ENCODE measurements at regions of chr22 and their contacts with region 1.

Region 1: GRCh38 chr22:46006379-46007002 is 29.5 kb upstream of the WNT7B start:
- H3K4me3 ChIP-seq: no peak overlapping the region
- H3K27ac ChIP-seq: peak overlapping the region; percentile 10; the same call in 1 of the 2 replicates
- H3K4me1 ChIP-seq: no peaks in the 10 kb centered on the region; the same call in 1 of the 2 replicates
- CTCF ChIP-seq: peak; percentile 96

Region 2: DNA sequence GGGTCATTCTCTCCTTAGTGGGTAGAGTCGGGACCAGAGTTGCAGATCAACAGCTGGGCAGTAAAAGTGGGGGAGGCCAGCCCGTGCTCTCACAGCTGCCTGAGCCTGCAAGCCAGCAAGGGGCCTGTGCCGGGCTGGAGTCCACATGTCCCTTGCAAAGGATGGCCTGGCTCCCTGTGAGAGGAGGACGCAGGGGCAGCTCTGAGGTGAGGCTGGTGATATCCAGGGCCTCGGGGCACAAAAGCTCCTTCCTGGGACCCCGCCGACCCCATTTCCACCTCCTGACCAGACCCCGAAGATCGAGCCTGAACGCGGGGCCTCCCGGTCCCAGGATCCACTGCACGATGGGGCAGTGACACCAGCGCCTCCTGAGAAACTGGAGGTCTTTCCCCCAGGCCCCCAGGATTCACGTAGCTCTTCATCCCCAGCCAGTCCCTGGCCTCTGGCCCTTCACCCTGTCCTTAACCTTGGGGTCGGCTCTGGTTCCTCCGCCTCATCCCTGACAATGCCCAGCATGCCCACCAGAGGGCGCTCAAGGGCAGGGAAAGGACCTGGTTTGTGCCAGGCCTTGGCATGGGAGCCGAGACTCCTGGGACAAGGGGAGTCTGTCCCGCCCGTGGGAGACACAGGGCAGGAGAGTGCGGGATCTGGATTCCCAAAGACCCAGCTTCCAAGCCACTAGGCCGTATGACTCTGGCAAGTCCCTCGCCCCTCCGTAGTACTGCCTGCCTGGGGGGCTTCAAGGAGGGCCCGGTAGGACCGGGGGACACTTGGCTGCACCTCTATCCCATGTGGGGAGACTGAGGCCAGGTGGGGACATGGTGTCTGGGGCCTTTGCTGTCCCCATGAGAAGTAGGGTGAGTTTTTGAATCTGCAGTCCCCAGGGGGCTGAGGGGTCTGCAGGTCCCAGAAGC is 11.7 kb before region 1 on chr22:
- CTCF ChIA-PET with region 1: interaction called, 99 read pairs
- POLR2A ChIA-PET with region 1: interaction called, 5 read pairs
- H3K4me3 ChIP-seq: no peak overlapping the region
- H3K27ac ChIP-seq: no peak overlapping the region
- H3K4me1 ChIP-seq: no peaks in the 10 kb centered on the region
- CTCF ChIP-seq: peak; percentile 95

Region 3: DNA sequence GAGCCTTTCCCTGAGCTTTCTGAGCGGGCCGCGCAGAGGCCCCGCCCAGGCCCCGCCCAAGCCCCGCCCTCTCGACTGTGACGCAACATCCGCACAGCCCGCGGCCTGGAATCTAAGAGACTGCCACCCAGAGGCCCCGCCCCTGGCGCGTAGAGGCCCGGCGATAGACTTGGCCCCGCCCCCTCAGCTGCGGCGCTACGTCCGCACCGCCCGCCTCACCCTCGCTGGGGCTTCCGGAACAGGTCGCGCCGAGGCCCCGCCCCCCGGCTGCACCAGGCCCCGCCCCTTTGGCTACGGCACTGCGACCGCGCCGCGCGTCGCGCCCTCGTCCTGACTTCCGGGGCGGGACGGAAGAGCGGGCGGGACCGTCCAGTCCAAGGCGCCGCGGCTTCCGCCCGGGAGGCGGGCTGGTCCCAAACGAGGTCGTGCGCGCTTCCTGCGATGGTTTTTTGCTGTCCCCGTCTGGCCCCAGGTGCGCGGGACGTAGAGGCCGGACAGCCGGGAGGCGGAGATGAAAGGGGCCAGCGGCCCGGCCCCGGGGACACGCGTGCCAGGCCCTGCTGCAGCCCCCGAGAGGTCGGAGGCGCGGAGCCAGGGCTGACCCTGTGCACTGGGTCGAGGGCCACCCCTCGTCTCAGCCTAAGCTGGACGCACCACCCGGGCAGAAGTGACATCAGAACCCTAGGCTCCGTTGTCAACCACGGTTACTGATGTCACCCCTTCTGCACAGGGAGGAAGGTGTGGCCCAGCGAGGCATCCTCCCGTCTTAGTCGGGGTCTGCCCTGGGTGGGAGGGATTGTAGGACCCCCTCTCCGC is 29.5 kb after region 1 on chr22:
- CTCF ChIA-PET with region 1: interaction called, 101 read pairs
- POLR2A ChIA-PET with region 1: interaction called, 41 read pairs
- H3K4me3 ChIP-seq: peak overlapping the region; percentile 83
- H3K27ac ChIP-seq: peak overlapping the region; percentile 80
- H3K4me1 ChIP-seq: peaks cover 5% of the 10 kb centered on the region
- CTCF ChIP-seq: no peak

Region 4: DNA sequence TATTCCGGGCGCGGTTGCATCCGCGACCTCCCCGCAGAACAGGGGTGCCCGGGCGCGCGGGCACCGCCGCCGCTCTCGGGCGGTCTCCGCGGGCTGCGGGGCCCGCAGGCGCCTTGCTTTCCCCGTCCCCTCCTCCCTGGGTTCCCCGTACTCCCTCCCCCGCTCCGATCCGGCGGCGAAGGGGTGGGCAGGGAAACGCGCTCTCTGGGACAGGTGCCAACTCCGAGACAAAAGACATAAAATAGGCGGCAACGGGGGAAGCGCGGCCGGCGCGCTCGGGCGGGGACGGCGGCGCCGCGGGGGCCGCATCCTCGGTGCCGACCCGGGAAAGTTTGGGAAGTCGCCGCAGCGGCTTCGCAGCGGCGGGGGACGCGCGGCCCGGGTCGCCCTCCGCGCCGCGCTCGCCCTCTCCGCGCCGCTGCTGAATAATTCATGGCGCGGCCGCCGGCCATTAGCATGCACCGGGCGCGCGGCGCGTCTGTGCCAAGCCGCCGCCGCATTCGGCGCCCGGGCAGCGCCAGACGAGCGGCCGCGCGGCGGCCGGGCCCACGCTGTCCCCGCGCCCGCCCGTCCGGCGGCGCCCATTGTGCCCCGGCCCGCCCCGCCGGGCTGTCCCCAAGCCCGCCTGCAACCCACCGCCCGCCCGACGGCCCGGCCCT is 65.1 kb after region 1 on chr22:
- CTCF ChIA-PET with region 1: interaction called, 40 read pairs
- POLR2A ChIA-PET with region 1: interaction called, 37 read pairs
- H3K4me3 ChIP-seq: peak overlapping the region; percentile 99
- H3K27ac ChIP-seq: peak overlapping the region; percentile 100
- H3K4me1 ChIP-seq: peaks cover 25% of the 10 kb centered on the region
- CTCF ChIP-seq: no peak

Region 5: GRCh38 chr22:46084943-46085830 is 78.7 kb after region 1 on chr22:
- CTCF ChIA-PET with region 1: interaction called, 24 read pairs
- POLR2A ChIA-PET with region 1: interaction called, 5 read pairs
- H3K4me3 ChIP-seq: no peak overlapping the region
- H3K27ac ChIP-seq: peak overlapping the region; percentile 33; the same call in 1 of the 2 replicates
- H3K4me1 ChIP-seq: peaks cover 7% of the 10 kb centered on the region
- CTCF ChIP-seq: peak; percentile 27; the same call in 1 of the 2 replicates

Region 6: DNA sequence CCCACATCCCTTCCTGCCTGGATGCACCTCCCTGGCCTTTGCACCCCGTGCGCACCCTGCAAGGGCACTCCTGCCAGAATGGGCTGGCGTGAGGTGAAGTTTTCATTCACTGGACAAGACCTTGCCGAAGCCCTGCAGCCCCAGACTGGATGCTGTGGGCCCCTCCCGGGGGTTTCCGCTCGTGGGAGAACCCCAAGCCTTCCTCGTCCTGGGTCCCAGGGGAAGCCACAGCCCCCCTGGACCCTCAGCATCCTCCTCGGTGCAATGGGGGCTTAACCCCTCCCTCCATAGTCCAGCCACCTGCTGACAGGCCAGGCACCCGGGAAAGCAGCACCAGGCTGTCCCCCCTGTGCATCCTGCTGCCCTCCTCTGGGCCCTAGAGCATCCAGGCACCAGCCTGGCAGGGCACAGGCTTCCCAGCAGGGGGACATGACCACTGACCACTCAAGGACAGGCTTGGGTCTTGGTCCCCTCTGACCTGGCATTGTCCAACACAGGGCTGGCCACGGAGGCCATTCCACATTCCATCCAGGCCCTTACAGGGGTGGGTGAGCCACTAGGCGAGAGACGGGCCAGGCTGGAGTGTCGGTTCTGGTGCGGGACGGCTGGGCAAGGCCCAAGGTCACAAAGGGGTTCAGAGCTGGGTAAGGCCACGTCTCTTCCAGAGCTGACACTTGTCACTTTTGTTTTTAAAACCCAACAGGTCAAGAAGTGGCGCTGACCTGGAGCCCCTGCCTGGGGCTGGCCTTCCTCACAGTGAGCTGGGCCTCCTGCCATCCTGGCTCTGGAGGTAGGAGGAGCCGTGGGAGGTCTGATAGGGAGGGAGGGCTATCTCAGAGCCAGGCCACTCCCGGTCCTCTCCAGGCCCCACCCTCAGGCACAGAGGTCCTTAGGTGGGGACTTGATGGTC is 102.3 kb after region 1 on chr22:
- CTCF ChIA-PET with region 1: interaction called, 251 read pairs
- POLR2A ChIA-PET with region 1: interaction called, 4 read pairs
- H3K4me3 ChIP-seq: no peak overlapping the region
- H3K27ac ChIP-seq: no peak overlapping the region
- H3K4me1 ChIP-seq: no peaks in the 10 kb centered on the region
- CTCF ChIP-seq: 0 out of 2 replicates have a peak, but pooled peaks have one; percentile 20

Region 7: DNA sequence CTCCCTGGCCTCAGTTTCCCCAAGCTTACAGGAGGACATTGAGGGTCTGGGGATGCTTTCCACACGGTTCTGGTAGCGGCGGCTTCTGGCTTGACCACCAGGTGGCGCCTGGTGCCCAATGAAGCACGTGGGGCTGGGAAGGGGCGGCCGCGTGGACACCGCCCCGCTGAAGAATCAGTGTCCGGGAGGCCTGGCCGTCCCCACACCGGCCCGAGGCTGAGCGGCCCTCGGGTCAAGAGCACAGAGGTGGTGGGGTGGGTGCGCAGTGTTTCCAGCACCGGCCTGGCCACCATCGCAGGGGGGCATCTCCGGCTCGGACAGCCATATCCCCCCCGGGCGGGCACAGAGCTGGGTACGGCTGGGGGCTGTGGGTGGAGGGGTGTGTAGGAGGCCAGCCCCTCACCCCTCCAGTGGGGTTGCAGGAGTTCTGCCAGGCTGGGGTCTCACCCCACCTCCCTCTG is 116.0 kb after region 1 on chr22:
- CTCF ChIA-PET with region 1: interaction called, 251 read pairs
- POLR2A ChIA-PET with region 1: interaction called, 14 read pairs
- H3K4me3 ChIP-seq: no peak overlapping the region
- H3K27ac ChIP-seq: no peak overlapping the region
- H3K4me1 ChIP-seq: no peaks in the 10 kb centered on the region; the same call in 1 of the 2 replicates
- CTCF ChIP-seq: peak; percentile 95